Mammary epithelial cell (primary cell): ENCODE measurements at regions of chr5 and their contacts with region 1.

Region 1: GRCh38 chr5:138178516-138179276 is at the starts of genes BRD8 and KIF20A:
- DNase-seq: peak; percentile 95
- H3K4me3 ChIP-seq: peak within 1 kb of the TSS; percentile 77 to 99 (median 90)
- H3K27ac ChIP-seq: peak within 1 kb of the TSS; percentile 92
- H3K4me1 ChIP-seq: peaks cover 14% of the 10 kb centered on the region
- H3K27me3 ChIP-seq: no peaks in the 10 kb centered on the region
- CTCF ChIP-seq: no peak
- total RNA-seq, gene BRD8: 25.8 to 44.5 TPM
- total RNA-seq, gene KIF20A: 0.67 to 36.5 TPM

Region 2: GRCh38 chr5:138077065-138077696 is 101.5 kb before region 1 on chr5:
- CTCF ChIA-PET with region 1: no interaction called
- dilution Hi-C with region 1: no loop called
- in situ Hi-C with region 1: no loop called
- intact Hi-C with region 1: loop called (anchors 1 kb)
- DNase-seq: peak; percentile 46
- H3K4me3 ChIP-seq: no peak overlapping the region
- H3K27ac ChIP-seq: no peak overlapping the region
- H3K4me1 ChIP-seq: no peaks in the 10 kb centered on the region
- H3K27me3 ChIP-seq: no peaks in the 10 kb centered on the region
- CTCF ChIP-seq: peak; percentile 84 to 89

Region 3: GRCh38 chr5:138282920-138283742 is 104.4 kb after region 1 on chr5:
- CTCF ChIA-PET with region 1: interaction called, 9 read pairs
- dilution Hi-C with region 1: no loop called
- in situ Hi-C with region 1: no loop called
- intact Hi-C with region 1: loop called (anchors 1 kb)
- DNase-seq: peak; percentile 37
- H3K4me3 ChIP-seq: no peak overlapping the region
- H3K27ac ChIP-seq: no peak overlapping the region
- H3K4me1 ChIP-seq: no peaks in the 10 kb centered on the region
- H3K27me3 ChIP-seq: no peaks in the 10 kb centered on the region
- CTCF ChIP-seq: peak; percentile 40 to 72

Region 4: DNA sequence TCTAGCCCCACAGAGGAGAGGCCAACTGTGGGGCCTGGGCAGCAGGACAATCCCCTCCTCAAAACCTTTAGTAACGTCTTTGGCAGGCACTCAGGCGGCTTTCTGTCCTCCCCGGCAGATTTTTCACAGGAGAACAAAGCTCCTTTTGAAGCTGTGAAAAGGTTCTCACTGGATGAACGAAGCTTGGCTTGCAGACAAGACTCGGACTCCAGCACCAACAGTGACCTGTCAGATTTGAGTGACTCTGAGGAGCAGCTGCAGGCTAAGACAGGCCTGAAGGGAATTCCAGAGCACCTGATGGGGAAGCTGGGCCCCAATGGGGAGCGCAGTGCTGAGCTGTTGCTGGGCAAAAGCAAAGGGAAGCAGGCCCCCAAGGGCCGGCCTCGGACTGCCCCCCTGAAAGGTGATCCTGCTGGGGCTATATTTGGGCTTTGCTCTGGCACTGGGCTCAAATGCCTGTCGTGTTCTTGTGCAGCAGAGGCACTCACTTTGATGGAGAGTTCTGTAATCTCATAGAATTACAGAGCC is 213.2 kb after region 1 on chr5:
- CTCF ChIA-PET with region 1: no interaction called
- dilution Hi-C with region 1: loop called (anchors 5 kb)
- in situ Hi-C with region 1: no loop called
- intact Hi-C with region 1: no loop called
- DNase-seq: peak; percentile 43
- H3K4me3 ChIP-seq: no peak overlapping the region
- H3K27ac ChIP-seq: no peak overlapping the region
- H3K4me1 ChIP-seq: peaks cover 5% of the 10 kb centered on the region
- H3K27me3 ChIP-seq: no peaks in the 10 kb centered on the region
- CTCF ChIP-seq: no peak

Region 5: GRCh38 chr5:138449501-138450239 is 271.0 kb after region 1 on chr5:
- CTCF ChIA-PET with region 1: interaction called, 4 read pairs
- dilution Hi-C with region 1: no loop called
- in situ Hi-C with region 1: no loop called
- intact Hi-C with region 1: loop called (anchors 1 kb)
- DNase-seq: peak; percentile 76
- H3K4me3 ChIP-seq: no peak overlapping the region
- H3K27ac ChIP-seq: no peak overlapping the region
- H3K4me1 ChIP-seq: peaks cover 6% of the 10 kb centered on the region
- H3K27me3 ChIP-seq: no peaks in the 10 kb centered on the region
- CTCF ChIP-seq: peak; percentile 91 to 95

Region 6: DNA sequence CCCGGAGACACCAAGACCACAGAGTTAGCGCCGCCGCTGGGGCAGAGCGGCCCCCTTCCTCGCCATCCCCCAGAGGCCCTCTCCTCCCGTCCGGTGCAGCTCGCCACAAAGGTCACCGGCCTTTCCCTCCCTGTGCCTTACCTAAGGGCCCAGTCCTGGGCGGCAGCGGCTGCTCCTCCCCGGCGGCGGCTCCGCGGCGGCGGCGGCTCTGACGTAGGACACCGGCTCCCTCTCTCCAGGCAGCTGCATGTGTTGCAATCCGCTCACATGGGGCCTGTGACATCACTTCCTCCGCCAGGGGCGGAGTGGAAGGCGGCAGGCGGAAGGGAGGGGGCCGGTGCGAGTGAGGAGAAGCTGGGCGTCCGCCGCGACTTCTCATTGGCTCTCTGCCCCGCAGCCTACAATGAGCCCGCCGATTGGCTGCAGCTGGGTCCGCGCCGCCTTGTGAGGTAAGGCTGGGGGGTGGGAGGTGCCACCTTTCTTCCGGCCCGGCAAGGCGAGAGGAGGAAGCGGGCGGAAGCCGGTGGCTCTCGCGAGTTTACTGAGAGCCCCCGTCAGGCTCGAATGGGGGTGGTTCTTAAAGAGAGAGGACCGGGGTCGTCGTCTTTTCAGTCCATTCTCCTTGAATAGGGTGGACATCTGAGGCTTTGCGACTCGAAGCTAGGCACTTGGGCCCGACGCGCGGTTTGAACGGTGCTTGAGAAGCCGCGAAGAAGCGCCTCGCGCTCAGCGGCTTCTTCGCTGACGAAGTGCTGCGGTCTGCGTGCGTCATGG is 364.4 kb after region 1 on chr5 and contains the start of gene ETF1:
- CTCF ChIA-PET with region 1: no interaction called
- dilution Hi-C with region 1: no loop called
- in situ Hi-C with region 1: loop called in 1 of 2 experiments (anchors 25 kb)
- intact Hi-C with region 1: loop called (anchors 2 kb)
- DNase-seq: peak; percentile 100
- H3K4me3 ChIP-seq: peak within 1 kb of the TSS; percentile 80 to 96 (median 82)
- H3K27ac ChIP-seq: peak within 1 kb of the TSS; percentile 100
- H3K4me1 ChIP-seq: peaks cover 36% of the 10 kb centered on the region
- H3K27me3 ChIP-seq: no peaks in the 10 kb centered on the region
- CTCF ChIP-seq: no peak
- total RNA-seq, gene ETF1: 167 to 200 TPM